Sigmoid colon (tissue), 7 donors: ENCODE measurements at regions of chr11 and their contacts with region 1.

Region 1: DNA sequence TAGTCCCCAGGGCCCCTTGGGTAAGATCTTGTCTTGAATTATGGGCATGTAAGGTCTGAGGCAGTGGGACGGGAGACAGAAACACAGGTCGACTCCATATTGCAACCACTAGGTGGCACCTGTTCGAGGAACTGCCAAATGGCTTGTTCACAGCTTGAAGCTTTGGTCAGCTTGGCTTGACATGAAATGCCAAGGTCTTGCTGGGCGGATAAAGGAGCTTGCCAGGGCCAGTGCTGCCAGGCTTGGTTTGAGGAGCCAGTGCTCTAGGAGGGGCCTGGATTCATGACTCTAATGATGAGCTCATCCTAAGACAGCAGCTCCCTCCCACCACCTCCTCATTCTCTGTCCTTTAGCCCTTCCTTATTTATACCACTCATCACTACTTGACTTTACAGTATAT is 11.9 kb upstream of the NRIP3 start:
- DNase-seq: peak; percentile 86
- H3K4me3 ChIP-seq: no peak overlapping the region
- H3K27ac ChIP-seq: no peak overlapping the region
- H3K4me1 ChIP-seq: peaks cover 0 to 17% (median 7%) of the 10 kb centered on the region in 4 donors
- H3K27me3 ChIP-seq: no peaks in the 10 kb centered on the region
- CTCF ChIP-seq: peak; percentile 43 to 76 (median 72)
- EP300 ChIP-seq: no peak
- POLR2A ChIP-seq: no peak

Region 2: DNA sequence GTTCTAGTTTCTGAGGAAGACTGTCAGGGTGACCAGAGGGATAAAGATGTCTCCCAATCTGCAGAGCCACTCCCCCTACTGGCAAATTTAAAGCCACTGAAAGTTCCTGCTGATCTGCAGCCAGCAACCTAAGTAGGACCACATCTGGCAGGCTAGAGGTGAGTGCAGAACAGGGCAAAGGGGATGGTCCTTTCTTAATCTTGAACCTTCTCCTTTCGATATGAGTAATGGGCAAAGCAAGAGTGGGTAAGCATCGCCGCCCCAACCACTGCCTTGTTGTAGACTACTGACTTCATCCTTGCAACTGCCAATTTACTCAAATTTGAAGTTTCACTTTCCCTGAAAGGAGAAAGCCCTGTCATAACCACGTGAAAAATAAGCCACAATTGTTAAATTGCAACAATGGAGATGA is 45.0 kb after region 1 on chr11:
- intact Hi-C with region 1: no loop called
- DNase-seq: no peak
- H3K4me3 ChIP-seq: no peak overlapping the region
- H3K27ac ChIP-seq: no peak overlapping the region
- H3K4me1 ChIP-seq: peaks cover 0 to 13% (median 4%) of the 10 kb centered on the region in 4 donors
- H3K27me3 ChIP-seq: no peaks in the 10 kb centered on the region
- CTCF ChIP-seq: no peak
- EP300 ChIP-seq: no peak
- POLR2A ChIP-seq: no peak

Region 3: DNA sequence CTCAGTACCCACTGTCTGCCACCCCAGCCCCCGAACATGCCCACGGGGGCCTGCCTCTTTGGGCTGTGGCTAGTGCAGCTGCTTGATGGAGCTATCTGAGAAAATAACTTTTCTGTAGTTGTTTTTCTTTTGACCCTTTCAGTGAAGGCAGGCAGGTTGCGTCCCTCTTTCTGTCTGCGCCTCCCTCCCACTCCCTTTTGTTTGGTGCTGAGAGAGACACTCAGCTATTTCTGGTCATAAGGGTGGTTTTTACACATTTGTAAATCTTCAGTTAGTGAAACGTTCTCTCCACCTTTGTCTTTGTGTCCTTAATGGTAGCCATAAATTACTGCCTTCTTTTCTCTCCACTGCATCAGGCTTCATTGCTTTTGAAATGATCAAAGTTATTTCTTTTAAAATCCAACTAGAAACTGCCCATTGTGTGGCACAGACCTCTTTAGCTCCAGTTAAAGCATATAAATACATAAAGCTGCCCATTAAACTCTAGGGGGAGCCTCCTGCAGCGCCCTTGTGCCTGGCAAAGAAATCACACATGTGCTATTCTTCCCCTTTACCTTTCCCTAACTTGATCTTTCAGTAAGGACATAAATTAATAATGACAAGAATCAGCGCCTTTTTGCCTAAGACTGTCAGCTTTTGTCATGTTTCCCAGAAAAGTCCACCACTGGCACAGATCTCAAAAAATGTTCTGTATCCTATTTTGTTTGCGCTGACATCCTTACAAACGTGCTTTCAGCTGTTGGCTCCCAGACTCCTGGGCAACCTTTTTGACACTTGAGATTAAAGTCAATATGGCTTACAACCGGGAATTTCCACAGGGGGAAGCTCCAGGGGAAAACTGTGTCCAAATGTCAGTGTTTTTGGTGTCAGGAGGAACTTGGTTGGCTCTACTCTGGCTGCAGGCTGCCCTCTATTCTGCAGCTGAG is 77.4 kb after region 1 on chr11:
- intact Hi-C with region 1: loop called (anchors 5 kb)
- DNase-seq: no peak
- H3K4me3 ChIP-seq: no peak overlapping the region
- H3K27ac ChIP-seq: no peak overlapping the region
- H3K4me1 ChIP-seq: peaks cover 0 to 16% (median 13%) of the 10 kb centered on the region in 4 donors
- H3K27me3 ChIP-seq: peaks cover 0 to 13% (median 5%) of the 10 kb centered on the region in 3 donors
- CTCF ChIP-seq: no peak
- EP300 ChIP-seq: no peak
- POLR2A ChIP-seq: no peak

Region 4: GRCh38 chr11:9137293-9138132 is 121.8 kb after region 1 on chr11:
- intact Hi-C with region 1: loop called (anchors 1 kb)
- DNase-seq: peak; percentile 89
- H3K4me3 ChIP-seq: no peak overlapping the region
- H3K27ac ChIP-seq: peak overlapping the region in 2 of 4 donors; percentile 26 to 35
- H3K4me1 ChIP-seq: peaks cover 0 to 6% (median 1%) of the 10 kb centered on the region in 4 donors
- H3K27me3 ChIP-seq: no peaks in the 10 kb centered on the region
- CTCF ChIP-seq: peak; percentile 85 to 98 (median 94)
- EP300 ChIP-seq: no peak
- POLR2A ChIP-seq: no peak